ENCODE measurements at regions of chr1 and their contacts with region 1.

Region 1: DNA sequence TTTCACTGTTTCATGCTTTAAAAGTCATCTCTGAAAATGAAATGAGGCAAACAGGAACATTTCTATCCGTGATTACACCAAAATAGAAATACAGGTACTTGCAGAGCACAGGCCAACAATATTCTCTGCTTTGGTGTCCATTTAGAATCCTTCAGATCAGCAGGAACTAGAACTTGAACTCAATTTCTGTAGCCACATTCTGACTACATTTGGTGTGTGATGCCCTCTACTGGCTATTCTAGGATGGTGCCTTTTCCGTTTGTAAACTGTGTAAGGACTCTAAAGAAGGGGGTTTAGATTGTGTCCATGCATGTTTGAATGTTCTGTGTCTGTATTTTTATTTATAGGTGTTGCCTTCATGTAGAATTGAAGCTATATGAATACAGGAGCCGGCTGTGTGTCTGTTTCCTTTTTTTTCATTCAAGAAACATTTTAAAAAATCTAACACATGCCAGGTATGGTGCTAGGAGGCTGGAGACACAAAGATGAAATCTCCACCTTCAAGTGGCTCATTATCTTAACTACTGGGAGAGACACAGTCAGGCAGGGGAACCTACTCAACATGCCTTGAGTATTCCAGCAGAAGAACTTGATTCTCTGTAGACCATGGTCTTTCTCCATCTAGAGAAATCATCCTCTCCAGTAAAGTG is 7.6 kb upstream of the ZNF326 start:
- DNase-seq: peak; percentile 38
- H3K4me3 Mint-ChIP-seq: no peak overlapping the region
- H3K27ac Mint-ChIP-seq: no peak overlapping the region
- H3K4me1 Mint-ChIP-seq: peaks cover 9% of the 10 kb centered on the region
- H3K27me3 Mint-ChIP-seq: peaks cover 15% of the 10 kb centered on the region

Region 2: DNA sequence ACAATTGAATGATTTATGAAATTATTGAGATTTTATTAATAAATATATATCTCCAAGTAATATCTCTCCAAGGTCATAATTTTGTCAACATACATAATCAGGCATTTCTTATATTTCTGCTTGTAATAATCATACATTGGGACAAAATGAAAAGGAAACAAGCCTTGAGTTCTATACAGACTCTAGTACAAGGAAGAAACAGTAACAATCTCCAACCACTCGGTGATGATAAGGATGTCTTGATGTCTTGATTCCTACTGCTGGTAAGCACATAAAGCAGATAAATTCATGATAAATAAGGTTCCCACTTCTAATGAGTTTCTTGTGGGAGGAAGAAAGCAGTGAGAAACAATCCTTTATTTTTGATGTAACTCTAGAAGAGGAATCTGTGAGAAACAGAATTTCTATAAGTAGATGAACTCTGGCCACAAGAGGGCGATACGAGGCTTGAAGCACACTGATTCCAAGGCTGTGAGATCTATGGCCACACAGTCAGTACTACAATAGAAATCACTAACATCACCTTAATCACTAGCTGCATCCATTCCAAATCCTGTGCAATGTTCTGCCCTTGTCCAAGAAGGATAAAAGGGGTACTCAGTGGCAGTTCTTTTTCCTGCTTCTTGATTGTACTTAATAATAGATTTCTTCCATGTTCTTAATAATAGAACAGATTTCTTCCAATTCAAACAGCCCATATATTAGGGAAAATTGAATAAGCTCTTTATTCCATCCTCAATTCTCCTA is 504.1 kb before region 1 on chr1:
- intact Hi-C with region 1: loop called (anchors 5 kb)
- DNase-seq: peak; percentile 58
- H3K4me3 Mint-ChIP-seq: no peak overlapping the region
- H3K27ac Mint-ChIP-seq: no peak overlapping the region
- H3K4me1 Mint-ChIP-seq: peaks cover 25% of the 10 kb centered on the region
- H3K27me3 Mint-ChIP-seq: no peaks in the 10 kb centered on the region

Region 3: DNA sequence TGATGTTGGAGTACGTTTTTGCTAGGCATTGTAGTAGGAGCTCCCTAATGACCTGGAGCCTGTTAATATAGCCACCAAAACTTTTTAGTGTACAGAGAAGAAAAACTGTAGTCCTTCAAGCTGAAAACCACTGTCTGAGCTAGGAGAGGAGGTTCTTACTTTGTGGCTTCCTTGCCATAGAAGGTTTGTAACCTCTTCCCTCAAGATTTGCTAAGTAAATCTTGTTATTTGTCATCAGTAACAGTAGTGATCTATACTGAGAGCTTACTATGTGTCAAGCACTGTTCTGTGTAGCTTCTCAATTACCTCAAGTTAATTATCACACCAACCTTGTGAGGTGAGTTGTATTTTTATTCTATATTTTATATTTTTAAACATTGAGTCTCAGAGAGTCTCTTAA is 375.6 kb before region 1 on chr1:
- intact Hi-C with region 1: loop called (anchors 5 kb)
- DNase-seq: no peak
- H3K4me3 Mint-ChIP-seq: peak overlapping the region; percentile 81
- H3K27ac Mint-ChIP-seq: peak overlapping the region; percentile 99
- H3K4me1 Mint-ChIP-seq: peaks cover 80% of the 10 kb centered on the region
- H3K27me3 Mint-ChIP-seq: no peaks in the 10 kb centered on the region

Region 4: GRCh38 chr1:89780721-89781120 is 206.6 kb before region 1 on chr1:
- intact Hi-C with region 1: loop called (anchors 1 kb)
- DNase-seq: no peak
- H3K4me3 Mint-ChIP-seq: peak overlapping the region; percentile 56
- H3K27ac Mint-ChIP-seq: peak overlapping the region; percentile 96
- H3K4me1 Mint-ChIP-seq: peaks cover 38% of the 10 kb centered on the region
- H3K27me3 Mint-ChIP-seq: no peaks in the 10 kb centered on the region

Region 5: GRCh38 chr1:89804642-89805237 is 182.6 kb before region 1 on chr1:
- intact Hi-C with region 1: loop called (anchors 1 kb)
- DNase-seq: peak; percentile 74
- H3K4me3 Mint-ChIP-seq: no peak overlapping the region
- H3K27ac Mint-ChIP-seq: no peak overlapping the region
- H3K4me1 Mint-ChIP-seq: peaks cover 6% of the 10 kb centered on the region
- H3K27me3 Mint-ChIP-seq: peaks cover 6% of the 10 kb centered on the region

Region 6: GRCh38 chr1:89953072-89953626 is 34.1 kb before region 1 on chr1:
- intact Hi-C with region 1: loop called (anchors 5 kb)
- DNase-seq: peak; percentile 16
- H3K4me3 Mint-ChIP-seq: no peak overlapping the region
- H3K27ac Mint-ChIP-seq: peak overlapping the region; percentile 26
- H3K4me1 Mint-ChIP-seq: peaks cover 29% of the 10 kb centered on the region
- H3K27me3 Mint-ChIP-seq: no peaks in the 10 kb centered on the region